ENCODE measurements at regions of chr1 and their contacts with region 1.

Region 1: DNA sequence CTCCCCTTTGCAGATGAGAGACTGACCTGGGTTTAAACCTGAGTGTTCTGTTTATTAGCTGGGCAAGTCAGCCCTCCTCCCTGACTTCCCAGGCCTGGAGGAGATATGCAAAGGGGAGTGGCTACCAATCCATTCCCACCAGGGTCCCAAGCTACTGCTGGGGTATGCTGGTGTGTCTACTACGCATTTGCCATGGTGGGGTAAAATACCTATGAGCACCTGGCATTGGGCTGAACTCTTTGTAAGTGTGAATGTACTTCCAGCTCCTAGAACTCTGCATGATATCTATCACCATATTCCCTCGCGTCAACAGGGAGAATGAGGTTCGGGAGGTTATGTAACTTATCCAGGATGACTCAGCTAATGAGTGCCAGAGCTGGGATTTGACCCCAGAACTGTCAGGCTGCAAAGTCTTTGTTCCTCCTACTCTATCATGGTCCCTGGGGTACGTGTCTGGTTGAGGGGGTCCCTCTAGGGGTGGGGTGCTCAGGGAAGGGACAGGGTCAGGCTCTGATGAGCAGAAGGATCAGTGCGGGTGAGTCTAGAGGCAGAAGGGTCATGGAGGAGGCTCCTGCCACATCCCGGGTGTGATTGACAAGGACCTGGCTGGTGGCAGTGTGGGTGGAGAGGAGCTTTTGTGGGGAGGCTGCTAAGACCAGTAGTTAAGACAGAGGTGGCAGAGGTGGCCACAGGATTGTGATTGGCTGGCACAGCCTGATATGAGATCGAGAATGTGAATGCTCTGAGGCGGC is 16.7 kb downstream of the AMPD2 start:
- DNase-seq: peak in 2 of 3 donors; percentile 23 to 47
- H3K4me3 ChIP-seq: no peak overlapping the region
- H3K4me3 Mint-ChIP-seq: peak overlapping the region in 1 of 2 donors; percentile 22
- H3K27ac ChIP-seq: no peak overlapping the region
- H3K27ac Mint-ChIP-seq: peak overlapping the region in 4 of 7 donors; percentile 16 to 79 (median 52)
- H3K4me1 ChIP-seq: peaks cover 20 to 25% of the 10 kb centered on the region in 2 donors
- H3K4me1 Mint-ChIP-seq: peaks cover 25% of the 10 kb centered on the region
- H3K27me3 ChIP-seq: no peaks in the 10 kb centered on the region
- H3K27me3 Mint-ChIP-seq: peaks cover 1 to 14% (median 6%) of the 10 kb centered on the region in 3 donors
- CTCF ChIP-seq: no peak

Region 2: GRCh38 chr1:109598655-109599054 is 37.7 kb before region 1 on chr1:
- intact Hi-C with region 1: loop called in 1 of 2 experiments (anchors 5 kb)
- DNase-seq: no peak
- H3K4me3 ChIP-seq: no peak overlapping the region
- H3K4me3 Mint-ChIP-seq: no peak overlapping the region
- H3K27ac ChIP-seq: no peak overlapping the region
- H3K27ac Mint-ChIP-seq: peak overlapping the region in 4 of 7 donors; percentile 32 to 78 (median 40)
- H3K4me1 ChIP-seq: peaks cover 4 to 7% of the 10 kb centered on the region in 2 donors
- H3K4me1 Mint-ChIP-seq: peaks cover 9% of the 10 kb centered on the region
- H3K27me3 ChIP-seq: no peaks in the 10 kb centered on the region
- H3K27me3 Mint-ChIP-seq: no peaks in the 10 kb centered on the region
- CTCF ChIP-seq: peak; percentile 29